Naive thymus-derived CD4-positive, alpha-beta T cell (primary cell): ENCODE measurements at regions of chr1 and their contacts with region 1.

Region 1: GRCh38 chr1:234309598-234310459 is 63.4 kb upstream of the COA6 start:
- DNase-seq: peak; percentile 26 to 74 (median 62)
- ATAC-seq: peak; percentile 94
- H3K4me3 ChIP-seq: no peak overlapping the region
- H3K4me3 Mint-ChIP-seq: peak overlapping the region in 4 of 10 donors; percentile 5 to 48 (median 26)
- H3K27ac ChIP-seq: no peak overlapping the region
- H3K27ac Mint-ChIP-seq: peak overlapping the region in 5 of 9 donors; percentile 16 to 99 (median 52)
- H3K4me1 ChIP-seq: peaks cover 13 to 16% of the 10 kb centered on the region in 2 donors
- H3K4me1 Mint-ChIP-seq: peaks cover 0 to 35% (median 16%) of the 10 kb centered on the region in 7 donors
- H3K27me3 ChIP-seq: no peaks in the 10 kb centered on the region
- H3K27me3 Mint-ChIP-seq: peaks cover 0 to 12% (median 4%) of the 10 kb centered on the region in 5 donors

Region 2: GRCh38 chr1:233304489-233305102 is 1005.2 kb before region 1 on chr1:
- CTCF ChIA-PET with region 1: no interaction called
- POLR2A ChIA-PET with region 1: no interaction called
- intact Hi-C with region 1: loop called in 1 of 2 experiments (anchors 1 kb)
- DNase-seq: peak in 5 of 9 donors; percentile 17 to 41 (median 33)
- ATAC-seq: peak; percentile 61
- H3K4me3 ChIP-seq: no peak overlapping the region
- H3K4me3 Mint-ChIP-seq: no peak overlapping the region
- H3K27ac ChIP-seq: no peak overlapping the region
- H3K27ac Mint-ChIP-seq: no peak overlapping the region
- H3K4me1 ChIP-seq: no peaks in the 10 kb centered on the region
- H3K4me1 Mint-ChIP-seq: no peaks in the 10 kb centered on the region
- H3K27me3 ChIP-seq: no peaks in the 10 kb centered on the region
- H3K27me3 Mint-ChIP-seq: peaks cover 9 to 46% (median 19%) of the 10 kb centered on the region in 5 donors

Region 3: GRCh38 chr1:234114648-234115307 is 195.1 kb before region 1 on chr1:
- CTCF ChIA-PET with region 1: no interaction called
- POLR2A ChIA-PET with region 1: no interaction called
- intact Hi-C with region 1: loop called (anchors 1 kb)
- DNase-seq: peak in 6 of 9 donors; percentile 10 to 43 (median 26)
- ATAC-seq: peak; percentile 44
- H3K4me3 ChIP-seq: peak overlapping the region; percentile 18
- H3K4me3 Mint-ChIP-seq: peak overlapping the region in 8 of 10 donors; percentile 47 to 84 (median 61)
- H3K27ac ChIP-seq: no peak overlapping the region
- H3K27ac Mint-ChIP-seq: peak overlapping the region in 2 of 9 donors; percentile 19 to 46
- H3K4me1 ChIP-seq: no peaks in the 10 kb centered on the region
- H3K4me1 Mint-ChIP-seq: peaks cover 3 to 9% (median 8%) of the 10 kb centered on the region in 7 donors
- H3K27me3 ChIP-seq: no peaks in the 10 kb centered on the region
- H3K27me3 Mint-ChIP-seq: peaks cover 0 to 36% (median 24%) of the 10 kb centered on the region in 5 donors

Region 4: DNA sequence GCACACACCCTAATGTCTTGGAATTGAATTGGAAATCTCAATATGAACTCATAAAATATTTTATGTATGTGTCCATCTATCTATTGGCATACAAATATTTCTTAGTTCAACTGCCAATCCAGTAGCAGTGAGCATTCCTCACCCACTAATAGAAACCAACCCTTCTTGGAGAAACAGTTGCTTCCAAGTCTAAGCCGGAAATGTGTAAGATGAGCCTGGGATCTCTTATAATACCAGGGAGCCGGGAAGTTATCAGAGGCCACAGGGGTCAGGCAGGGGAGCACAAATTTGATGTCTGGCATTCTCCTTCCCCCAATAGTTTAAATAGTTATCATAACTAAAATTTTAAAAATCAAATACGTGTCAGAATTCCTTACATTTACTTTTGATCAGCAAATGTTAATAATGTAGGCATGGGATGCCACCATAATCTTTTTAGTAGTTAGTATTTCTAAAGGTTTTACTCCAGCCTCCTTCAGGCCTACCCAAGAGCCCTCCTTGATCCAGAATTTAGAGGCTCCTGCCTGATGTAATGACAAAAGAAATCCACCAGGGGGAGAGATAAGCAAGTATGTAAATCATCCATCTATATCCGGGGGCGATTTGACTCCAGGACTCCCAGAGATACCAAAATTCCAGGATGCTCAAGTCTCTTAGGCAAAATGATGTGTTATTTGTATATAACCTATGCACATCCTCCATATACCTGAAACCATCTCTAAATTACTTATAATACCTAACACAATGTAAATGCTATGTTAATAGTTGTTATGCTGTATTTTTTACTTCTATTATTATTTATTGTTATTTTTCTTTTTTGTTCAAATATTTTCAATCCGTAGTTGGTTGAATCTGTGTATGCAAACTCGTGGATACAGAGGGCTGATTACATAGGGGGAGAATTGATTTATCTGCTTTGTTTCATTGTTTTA is 155.2 kb before region 1 on chr1:
- CTCF ChIA-PET with region 1: no interaction called
- POLR2A ChIA-PET with region 1: no interaction called
- intact Hi-C with region 1: loop called (anchors 1 kb)
- DNase-seq: peak in 6 of 9 donors; percentile 7 to 54 (median 46)
- ATAC-seq: peak; percentile 31
- H3K4me3 ChIP-seq: no peak overlapping the region
- H3K4me3 Mint-ChIP-seq: no peak overlapping the region
- H3K27ac ChIP-seq: no peak overlapping the region
- H3K27ac Mint-ChIP-seq: no peak overlapping the region
- H3K4me1 ChIP-seq: no peaks in the 10 kb centered on the region
- H3K4me1 Mint-ChIP-seq: no peaks in the 10 kb centered on the region
- H3K27me3 ChIP-seq: no peaks in the 10 kb centered on the region
- H3K27me3 Mint-ChIP-seq: peaks cover 4 to 25% (median 14%) of the 10 kb centered on the region in 5 donors

Region 5: GRCh38 chr1:234212764-234213657 is 96.8 kb before region 1 on chr1:
- CTCF ChIA-PET with region 1: no interaction called
- POLR2A ChIA-PET with region 1: no interaction called
- intact Hi-C with region 1: loop called (anchors 1 kb)
- DNase-seq: peak in 4 of 9 donors; percentile 28 to 49 (median 36)
- ATAC-seq: peak; percentile 36
- H3K4me3 ChIP-seq: no peak overlapping the region
- H3K4me3 Mint-ChIP-seq: peak overlapping the region; percentile 21 to 85 (median 80)
- H3K27ac ChIP-seq: no peak overlapping the region
- H3K27ac Mint-ChIP-seq: peak overlapping the region in 4 of 9 donors; percentile 14 to 43 (median 32)
- H3K4me1 ChIP-seq: peaks cover 0 to 17% of the 10 kb centered on the region in 2 donors
- H3K4me1 Mint-ChIP-seq: peaks cover 0 to 39% (median 22%) of the 10 kb centered on the region in 7 donors
- H3K27me3 ChIP-seq: no peaks in the 10 kb centered on the region
- H3K27me3 Mint-ChIP-seq: peaks cover 8 to 59% (median 25%) of the 10 kb centered on the region in 5 donors

Region 6: GRCh38 chr1:234246638-234247116 is 63.2 kb before region 1 on chr1:
- CTCF ChIA-PET with region 1: no interaction called
- POLR2A ChIA-PET with region 1: no interaction called
- intact Hi-C with region 1: no loop called
- DNase-seq: no peak
- ATAC-seq: no peak
- H3K4me3 ChIP-seq: no peak overlapping the region
- H3K4me3 Mint-ChIP-seq: no peak overlapping the region
- H3K27ac ChIP-seq: no peak overlapping the region
- H3K27ac Mint-ChIP-seq: no peak overlapping the region
- H3K4me1 ChIP-seq: no peaks in the 10 kb centered on the region
- H3K4me1 Mint-ChIP-seq: peaks cover 0 to 9% (median 0%) of the 10 kb centered on the region in 7 donors
- H3K27me3 ChIP-seq: no peaks in the 10 kb centered on the region
- H3K27me3 Mint-ChIP-seq: peaks cover 0 to 41% (median 5%) of the 10 kb centered on the region in 5 donors

Region 7: GRCh38 chr1:234326497-234327366 is 16.9 kb after region 1 on chr1:
- CTCF ChIA-PET with region 1: interaction called, 9 read pairs
- POLR2A ChIA-PET with region 1: no interaction called
- intact Hi-C with region 1: loop called in 1 of 2 experiments (anchors 1 kb)
- DNase-seq: peak; percentile 32 to 79 (median 67)
- ATAC-seq: peak; percentile 92
- H3K4me3 ChIP-seq: peak overlapping the region; percentile 64
- H3K4me3 Mint-ChIP-seq: peak overlapping the region; percentile 76 to 94 (median 90)
- H3K27ac ChIP-seq: peak overlapping the region; percentile 67
- H3K27ac Mint-ChIP-seq: peak overlapping the region; percentile 41 to 99 (median 85)
- H3K4me1 ChIP-seq: peaks cover 0 to 4% of the 10 kb centered on the region in 2 donors
- H3K4me1 Mint-ChIP-seq: peaks cover 23 to 36% (median 30%) of the 10 kb centered on the region in 7 donors
- H3K27me3 ChIP-seq: no peaks in the 10 kb centered on the region
- H3K27me3 Mint-ChIP-seq: peaks cover 4 to 23% (median 12%) of the 10 kb centered on the region in 5 donors